GM10248 (cell line): ENCODE measurements at regions of chr3 and their contacts with region 1.

Region 1: DNA sequence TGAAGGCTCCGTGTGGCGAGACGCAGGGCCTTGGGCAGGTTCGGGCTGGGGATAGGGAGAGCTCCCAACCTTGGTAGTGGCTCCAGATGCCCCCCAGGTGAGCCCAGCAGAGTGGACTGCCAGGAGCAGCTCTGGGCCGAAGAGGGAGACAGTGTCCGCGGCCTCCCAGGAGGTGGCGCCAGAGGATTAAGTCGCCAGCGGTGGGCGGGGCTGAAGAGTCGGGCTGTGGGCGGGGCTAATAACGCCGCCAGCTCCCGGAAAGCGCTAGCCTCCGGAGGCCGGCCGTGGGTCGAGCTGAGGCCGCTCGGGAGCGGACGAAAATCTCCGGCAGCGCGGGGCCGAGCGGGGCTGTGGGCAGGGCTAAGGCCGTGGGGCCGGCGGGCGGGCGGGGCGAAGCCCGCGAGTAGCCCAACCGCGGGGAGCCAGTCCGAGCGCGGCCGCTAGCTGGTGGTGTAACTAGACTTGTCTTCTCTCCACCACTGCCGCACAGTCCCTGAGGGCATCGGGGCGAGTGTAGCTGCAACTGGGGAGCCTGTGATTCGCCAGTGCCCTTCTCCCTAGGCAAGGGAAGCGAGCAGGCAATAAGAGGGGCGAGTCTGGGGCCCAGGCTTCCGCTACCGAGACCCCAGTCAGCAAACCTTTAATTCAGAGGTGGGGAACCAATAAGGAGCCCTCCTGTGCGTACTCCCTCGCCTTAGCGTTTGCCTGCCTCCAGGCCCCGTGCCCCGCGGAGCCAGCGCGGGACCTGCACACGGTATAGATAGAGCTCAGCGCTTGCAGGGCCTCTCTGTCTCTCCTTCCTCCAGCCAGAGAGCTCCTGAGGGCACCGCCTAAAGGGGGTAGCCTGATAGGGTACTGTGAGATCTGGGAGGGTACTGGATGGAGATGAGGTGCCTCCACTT is 14.4 kb upstream of the BSN start:
- DNase-seq: peak; percentile 96
- CTCF ChIP-seq: peak; percentile 90

Region 2: DNA sequence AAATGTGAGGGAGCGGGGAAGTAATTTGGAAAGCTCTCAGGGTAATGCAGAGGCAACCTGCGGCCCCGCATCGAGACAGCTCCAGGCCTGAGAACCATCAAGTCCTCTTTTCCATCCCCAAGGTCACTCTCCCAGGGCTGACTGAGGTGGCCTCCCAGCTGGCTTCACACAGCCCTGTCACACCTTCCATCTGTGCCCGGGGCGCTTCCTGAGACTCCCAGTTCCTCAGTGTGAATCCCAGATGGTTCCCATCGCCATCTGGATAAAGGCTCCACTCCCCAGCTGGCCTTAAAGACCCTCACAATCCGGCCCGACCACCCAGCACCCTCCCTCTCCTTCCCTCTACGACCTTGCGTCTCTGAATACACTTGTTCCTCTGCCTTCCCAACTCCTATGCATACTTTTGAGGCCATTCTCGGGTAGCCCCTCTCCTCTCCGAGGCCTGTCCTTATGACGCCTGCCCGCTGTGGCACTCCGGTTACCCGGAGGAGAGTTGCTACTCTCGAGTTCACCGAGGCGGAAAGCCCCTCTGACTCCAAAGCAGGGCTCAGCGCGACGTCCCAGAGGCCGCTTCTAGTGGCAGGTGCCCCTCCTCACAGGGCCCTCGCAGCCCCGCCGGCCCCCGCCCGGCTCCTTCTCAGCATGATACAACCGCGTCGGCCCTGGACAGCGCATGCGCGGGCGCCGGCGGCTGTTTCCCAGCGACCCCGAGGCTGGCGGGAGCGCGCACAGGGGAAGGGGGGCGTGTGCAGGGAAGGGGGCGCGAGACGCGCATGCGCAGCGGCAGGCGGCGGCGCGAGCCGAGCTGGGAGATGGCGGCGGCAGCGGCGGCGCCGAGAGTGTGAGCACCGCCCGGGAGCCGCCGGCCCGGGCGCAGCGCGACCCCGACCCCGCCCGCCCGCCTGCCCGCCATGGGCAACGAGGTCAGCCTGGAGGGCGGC is 14.1 kb after region 1 on chr3 and contains the start of gene BSN:
- CTCF ChIA-PET with region 1: interaction called, 34 read pairs
- POLR2A ChIA-PET with region 1: no interaction called
- DNase-seq: peak; percentile 99
- CTCF ChIP-seq: no peak

Region 3: DNA sequence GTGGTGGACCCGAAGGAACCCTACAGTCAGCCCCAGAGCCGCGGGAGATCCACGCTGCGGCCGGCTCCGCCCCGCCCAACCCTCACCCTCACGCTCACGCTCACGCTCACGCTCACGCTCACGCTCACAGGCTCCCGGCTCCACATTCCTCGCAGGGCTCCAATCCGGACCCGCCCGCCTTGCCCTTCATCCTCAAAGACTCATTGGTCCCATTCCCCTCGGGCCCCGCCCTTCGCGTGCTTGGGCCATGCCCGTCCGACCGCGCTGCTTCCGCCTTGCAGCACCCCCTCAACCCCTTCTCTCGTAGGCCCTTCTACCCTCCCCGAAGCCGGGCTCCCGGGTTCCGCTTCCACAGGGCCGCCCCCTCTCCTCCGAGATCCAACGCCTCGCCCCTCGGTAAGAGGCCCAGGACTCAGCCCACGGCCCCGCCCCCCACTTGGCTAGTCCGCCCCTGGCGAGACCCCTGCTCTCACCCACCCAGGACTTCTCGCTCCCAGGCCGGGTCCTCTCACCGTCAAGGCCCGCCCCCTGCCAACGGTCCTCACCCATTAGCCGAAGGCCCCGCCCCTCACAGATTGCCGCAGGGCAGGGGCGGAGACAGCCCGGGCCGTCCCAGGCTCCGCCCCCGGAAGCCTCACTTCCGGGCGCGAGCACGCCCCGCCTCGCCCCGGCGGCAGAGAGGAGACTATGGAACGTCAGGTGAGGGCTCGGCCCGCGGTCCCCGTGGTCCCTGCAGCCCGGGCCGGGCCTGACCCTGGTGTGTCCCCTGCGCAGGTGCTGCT is 134.0 kb after region 1 on chr3 and contains the start of gene APEH:
- CTCF ChIA-PET with region 1: interaction called, 198 read pairs
- POLR2A ChIA-PET with region 1: interaction called, 3 read pairs
- DNase-seq: peak; percentile 99
- CTCF ChIP-seq: no peak

Region 4: DNA sequence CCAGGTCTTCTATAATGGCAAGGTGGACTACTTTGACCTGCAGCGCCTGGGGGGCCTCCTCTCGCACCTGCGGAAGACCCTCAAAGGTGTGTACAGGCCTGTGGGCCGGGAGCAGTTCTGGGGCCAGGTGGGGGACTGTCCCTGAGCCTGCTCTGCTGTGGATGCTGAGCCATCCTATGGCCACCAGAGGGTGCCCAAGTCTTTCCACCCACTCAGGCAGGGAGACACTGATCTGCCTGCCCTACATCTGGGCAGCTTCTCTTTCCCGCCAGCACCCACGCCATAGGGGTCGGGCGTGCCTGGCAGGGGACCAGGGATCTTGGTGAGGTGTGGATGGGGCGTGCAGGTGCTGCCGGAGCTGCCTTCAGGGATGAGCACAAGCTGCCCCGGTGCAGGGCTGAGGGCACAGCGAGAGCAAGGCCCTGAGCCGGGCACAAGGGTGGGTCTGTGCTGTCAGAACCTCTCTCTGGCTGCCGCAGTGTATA is 163.6 kb after region 1 on chr3:
- CTCF ChIA-PET with region 1: interaction called, 13 read pairs
- POLR2A ChIA-PET with region 1: no interaction called
- DNase-seq: peak; percentile 90
- CTCF ChIP-seq: peak; percentile 85

Region 5: DNA sequence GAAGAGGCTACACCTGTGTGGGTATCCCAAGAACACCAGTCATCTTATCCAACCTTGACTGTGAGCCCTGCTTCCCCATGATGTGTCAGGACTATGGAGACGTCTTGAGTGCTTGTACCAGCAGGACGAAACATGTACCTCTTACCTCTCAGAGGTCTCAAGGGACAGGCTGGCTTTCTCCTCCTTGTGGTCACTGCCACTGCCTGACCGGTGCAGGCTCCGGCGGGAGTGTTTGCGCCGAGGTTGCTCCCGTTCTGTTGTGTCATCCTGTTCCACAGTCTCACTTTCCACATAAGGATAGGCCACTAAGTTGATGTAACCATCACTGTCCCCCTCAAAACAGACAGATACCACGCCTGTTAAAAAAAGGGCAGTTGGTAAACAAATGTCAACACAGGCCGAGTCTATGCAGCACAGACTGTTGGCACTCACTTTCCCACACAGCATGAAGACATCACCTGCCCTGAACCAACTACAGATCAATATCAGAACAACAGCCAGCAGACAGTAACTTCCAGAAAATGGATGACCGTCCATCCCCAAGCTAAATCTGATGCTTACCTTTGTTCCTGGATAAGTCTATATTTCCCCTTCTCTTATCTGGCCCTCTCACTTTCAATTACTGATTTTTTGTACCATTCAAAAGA is 198.3 kb after region 1 on chr3:
- CTCF ChIA-PET with region 1: no interaction called
- POLR2A ChIA-PET with region 1: no interaction called
- DNase-seq: no peak
- CTCF ChIP-seq: no peak

Region 6: GRCh38 chr3:49802719-49803464 is 263.0 kb after region 1 on chr3 and contains the start of gene INKA1:
- CTCF ChIA-PET with region 1: interaction called, 14 read pairs
- POLR2A ChIA-PET with region 1: no interaction called
- DNase-seq: peak; percentile 92
- CTCF ChIP-seq: peak; percentile 88